ENCODE measurements at regions of chr4 and their contacts with region 1.

Region 1: DNA sequence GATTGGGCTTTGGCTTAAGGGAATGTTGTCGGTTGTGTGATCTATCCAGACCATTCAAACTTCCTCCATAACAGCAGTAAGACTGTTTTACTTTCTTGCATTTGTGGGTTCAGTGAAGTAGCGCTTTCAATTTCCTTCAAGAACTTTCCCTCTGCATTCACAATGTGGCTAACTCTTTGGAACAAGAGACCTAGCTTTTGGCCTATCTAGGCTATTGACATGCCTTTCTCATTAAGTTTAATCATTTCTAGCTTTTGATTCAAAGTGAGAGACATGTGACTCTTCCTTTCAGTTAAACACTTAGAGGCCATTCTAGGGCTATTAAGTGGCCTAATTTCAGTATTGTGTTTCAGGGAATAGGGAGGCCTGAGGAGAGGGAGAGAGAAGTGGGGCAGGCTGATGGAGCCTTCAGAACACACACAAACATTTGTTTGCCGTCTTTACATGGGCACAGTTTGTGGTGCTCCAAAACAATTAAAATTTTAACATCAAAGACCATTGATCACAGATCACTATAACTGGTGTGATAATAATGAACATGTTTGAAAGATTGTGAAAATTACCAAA is 34.1 kb downstream of the ADH5 start:
- DNase-seq: no peak
- ATAC-seq: no peak
- H3K4me3 ChIP-seq: no peak overlapping the region
- H3K27ac ChIP-seq: no peak overlapping the region
- H3K4me1 ChIP-seq: peaks cover 0 to 24% (median 9%) of the 10 kb centered on the region in 9 donors
- H3K27me3 ChIP-seq: no peaks in the 10 kb centered on the region
- CTCF ChIP-seq: no peak

Region 2: DNA sequence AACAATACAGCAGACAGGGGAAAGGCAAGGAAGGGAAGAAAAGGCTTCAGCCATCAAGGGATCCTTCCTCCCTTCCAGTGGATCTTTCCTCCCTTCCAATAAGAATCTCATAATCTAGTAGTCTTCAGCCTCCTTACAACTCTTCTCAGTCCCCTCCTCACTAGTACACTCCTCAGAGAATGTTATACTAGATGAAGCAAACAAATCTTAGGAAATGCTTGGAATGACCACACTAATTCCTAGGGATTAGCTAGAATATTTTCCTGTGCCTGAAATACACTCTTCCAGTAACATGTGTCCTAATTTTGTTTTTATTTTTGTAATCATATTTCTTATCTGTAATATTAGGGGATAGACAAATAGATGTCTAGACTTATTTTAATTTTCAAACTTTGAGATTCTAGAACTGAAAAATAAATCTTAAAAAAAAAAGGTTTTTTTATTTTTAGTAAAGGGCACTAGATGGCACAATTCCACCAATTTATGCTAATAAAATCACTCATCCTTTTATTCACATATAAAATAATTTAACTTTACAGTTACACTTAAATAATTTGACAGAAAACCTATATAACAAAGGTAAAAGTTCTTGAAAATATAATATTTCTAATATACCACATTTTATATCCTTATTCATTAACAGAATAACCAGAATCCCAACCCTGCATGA is 904.3 kb before region 1 on chr4:
- intact Hi-C with region 1: loop called in 2 of 10 experiments (anchors 5 to 10 kb)
- DNase-seq: no peak
- ATAC-seq: no peak
- H3K4me3 ChIP-seq: no peak overlapping the region
- H3K27ac ChIP-seq: no peak overlapping the region
- H3K4me1 ChIP-seq: peaks cover 0 to 10% (median 0%) of the 10 kb centered on the region in 9 donors
- H3K27me3 ChIP-seq: no peaks in the 10 kb centered on the region
- CTCF ChIP-seq: peak in 6 of 9 donors; percentile 22 to 52 (median 39)

Region 3: DNA sequence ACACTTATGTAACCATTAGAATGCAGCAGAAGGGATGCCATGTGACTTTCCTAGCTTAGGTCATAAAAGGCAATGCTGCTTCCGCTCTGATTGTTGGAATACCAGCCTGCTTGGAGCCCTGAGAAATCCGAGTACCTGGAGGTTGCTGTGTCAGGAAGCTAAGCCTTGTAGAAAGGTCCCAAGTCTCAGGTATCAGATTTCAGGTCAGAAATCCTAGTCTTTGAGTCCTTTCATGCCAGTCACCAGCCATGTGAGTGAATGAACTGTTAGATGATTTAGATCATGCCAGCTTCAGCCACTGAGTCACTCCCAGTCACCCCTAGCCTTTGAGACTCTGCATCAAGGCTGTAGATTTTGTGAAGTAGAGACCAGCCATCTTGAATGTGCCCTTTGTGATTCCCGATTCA is 769.9 kb before region 1 on chr4:
- intact Hi-C with region 1: no loop called
- DNase-seq: no peak
- ATAC-seq: no peak
- H3K4me3 ChIP-seq: no peak overlapping the region
- H3K27ac ChIP-seq: no peak overlapping the region
- H3K4me1 ChIP-seq: peaks cover 0 to 19% (median 13%) of the 10 kb centered on the region in 9 donors
- H3K27me3 ChIP-seq: no peaks in the 10 kb centered on the region
- CTCF ChIP-seq: no peak

Region 4: GRCh38 chr4:98928505-98929340 is 125.8 kb before region 1 on chr4 and contains the start of gene EIF4E:
- intact Hi-C with region 1: loop called in 5 of 10 experiments (anchors 10 kb)
- DNase-seq: peak; percentile 97 to 98
- ATAC-seq: peak; percentile 91 to 98 (median 96)
- H3K4me3 ChIP-seq: peak within 1 kb of the TSS; percentile 82 to 97 (median 91)
- H3K27ac ChIP-seq: peak within 1 kb of the TSS; percentile 79 to 96 (median 93)
- H3K4me1 ChIP-seq: peaks cover 0 to 52% (median 24%) of the 10 kb centered on the region in 9 donors
- H3K27me3 ChIP-seq: no peaks in the 10 kb centered on the region
- CTCF ChIP-seq: peak in 6 of 9 donors; percentile 14 to 40 (median 32)
- total RNA-seq, gene EIF4E: 48.7 to 70.4 (median 58.4) TPM

Region 5: DNA sequence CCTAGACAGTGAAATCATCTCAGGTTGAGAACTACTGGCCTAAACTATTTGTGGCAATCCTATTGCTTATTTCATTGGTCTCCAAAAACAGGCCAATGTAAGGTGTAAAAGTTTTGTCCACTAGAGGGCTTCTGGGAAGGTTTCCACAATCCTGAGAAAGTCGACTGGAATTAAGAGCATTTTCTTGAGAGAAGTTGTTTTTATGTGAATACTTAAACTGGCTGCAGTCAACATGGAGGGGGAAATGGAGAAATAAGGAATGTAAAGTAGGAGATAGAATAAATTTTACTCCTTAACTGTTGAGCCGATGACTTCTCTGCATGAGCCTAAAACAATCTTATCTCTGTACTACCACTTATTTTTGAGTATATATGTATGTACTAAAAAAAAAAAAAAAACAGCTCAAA is 114.6 kb before region 1 on chr4:
- intact Hi-C with region 1: loop called in 6 of 10 experiments (anchors 2 to 10 kb)
- DNase-seq: no peak
- ATAC-seq: peak in 5 of 8 donors; percentile 42 to 62 (median 53)
- H3K4me3 ChIP-seq: no peak overlapping the region
- H3K27ac ChIP-seq: no peak overlapping the region
- H3K4me1 ChIP-seq: no peaks in the 10 kb centered on the region
- H3K27me3 ChIP-seq: no peaks in the 10 kb centered on the region
- CTCF ChIP-seq: peak; percentile 37 to 81 (median 73)

Region 6: GRCh38 chr4:98995183-98996055 is 59.1 kb before region 1 on chr4 and contains the start of gene METAP1:
- intact Hi-C with region 1: loop called (anchors 1 to 10 kb)
- DNase-seq: peak; percentile 90 to 94
- ATAC-seq: peak; percentile 94 to 98 (median 96)
- H3K4me3 ChIP-seq: peak within 1 kb of the TSS; percentile 73 to 99 (median 96)
- H3K27ac ChIP-seq: peak within 1 kb of the TSS; percentile 86 to 95 (median 93)
- H3K4me1 ChIP-seq: peaks cover 0 to 28% (median 13%) of the 10 kb centered on the region in 9 donors
- H3K27me3 ChIP-seq: no peaks in the 10 kb centered on the region
- CTCF ChIP-seq: peak; percentile 5 to 80 (median 49)
- total RNA-seq, gene METAP1: 54.2 to 79.7 (median 60.9) TPM

Region 7: GRCh38 chr4:99002279-99002678 is 52.2 kb before region 1 on chr4:
- intact Hi-C with region 1: loop called in 7 of 10 experiments (anchors 2 to 10 kb)
- DNase-seq: no peak
- ATAC-seq: peak in 1 of 8 donors; percentile 16
- H3K4me3 ChIP-seq: no peak overlapping the region
- H3K27ac ChIP-seq: peak overlapping the region in 3 of 10 donors; percentile 23 to 51 (median 35)
- H3K4me1 ChIP-seq: peaks cover 0 to 33% (median 17%) of the 10 kb centered on the region in 9 donors
- H3K27me3 ChIP-seq: no peaks in the 10 kb centered on the region
- CTCF ChIP-seq: no peak

Region 8: DNA sequence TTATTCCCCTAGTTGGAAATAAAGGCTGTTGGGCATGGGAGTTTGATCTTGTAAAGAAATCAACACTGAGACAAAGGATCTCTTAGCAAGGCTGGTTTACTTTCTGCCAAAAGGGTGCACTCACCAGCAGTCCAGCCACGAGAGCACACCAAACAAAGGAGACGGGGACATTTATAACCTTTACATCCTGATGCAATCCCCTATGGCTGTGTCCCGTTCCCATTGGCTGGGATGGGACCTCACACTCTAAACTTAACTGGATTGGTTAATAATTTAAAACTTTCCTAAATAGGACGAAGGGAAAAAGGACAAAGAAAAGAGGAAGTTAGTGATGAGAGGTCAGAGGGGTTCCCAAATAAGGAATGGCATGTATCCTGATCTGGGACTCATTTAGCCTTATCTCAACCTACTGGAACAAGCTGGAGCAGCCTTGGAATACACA is 41.1 kb before region 1 on chr4:
- intact Hi-C with region 1: loop called in 3 of 10 experiments (anchors 5 to 10 kb)
- DNase-seq: peak in 1 of 2 donors; percentile 43
- ATAC-seq: peak; percentile 88 to 95 (median 92)
- H3K4me3 ChIP-seq: peak overlapping the region in 7 of 10 donors; percentile 1 to 28 (median 8)
- H3K27ac ChIP-seq: peak overlapping the region; percentile 40 to 89 (median 80)
- H3K4me1 ChIP-seq: peaks cover 0 to 35% (median 17%) of the 10 kb centered on the region in 9 donors
- H3K27me3 ChIP-seq: no peaks in the 10 kb centered on the region
- CTCF ChIP-seq: no peak